ENCODE measurements at regions of chr14 and their contacts with region 1.

Region 1: GRCh38 chr14:69002069-69002468 is 23.0 kb upstream of the ACTN1 start:
- DNase-seq: no peak
- ATAC-seq: peak; percentile 77
- H3K4me3 ChIP-seq: no peak overlapping the region
- H3K27ac ChIP-seq: no peak overlapping the region
- H3K4me1 ChIP-seq: peaks cover 13 to 19% of the 10 kb centered on the region in 2 experiments
- H3K27me3 ChIP-seq: no peaks in the 10 kb centered on the region
- CTCF ChIP-seq: peak; percentile 27 to 41 (median 33); a peak in 4 of 6 replicates
- POLR2A ChIP-seq: no peak
- RAD21 ChIP-seq: peak; percentile 58

Region 2: DNA sequence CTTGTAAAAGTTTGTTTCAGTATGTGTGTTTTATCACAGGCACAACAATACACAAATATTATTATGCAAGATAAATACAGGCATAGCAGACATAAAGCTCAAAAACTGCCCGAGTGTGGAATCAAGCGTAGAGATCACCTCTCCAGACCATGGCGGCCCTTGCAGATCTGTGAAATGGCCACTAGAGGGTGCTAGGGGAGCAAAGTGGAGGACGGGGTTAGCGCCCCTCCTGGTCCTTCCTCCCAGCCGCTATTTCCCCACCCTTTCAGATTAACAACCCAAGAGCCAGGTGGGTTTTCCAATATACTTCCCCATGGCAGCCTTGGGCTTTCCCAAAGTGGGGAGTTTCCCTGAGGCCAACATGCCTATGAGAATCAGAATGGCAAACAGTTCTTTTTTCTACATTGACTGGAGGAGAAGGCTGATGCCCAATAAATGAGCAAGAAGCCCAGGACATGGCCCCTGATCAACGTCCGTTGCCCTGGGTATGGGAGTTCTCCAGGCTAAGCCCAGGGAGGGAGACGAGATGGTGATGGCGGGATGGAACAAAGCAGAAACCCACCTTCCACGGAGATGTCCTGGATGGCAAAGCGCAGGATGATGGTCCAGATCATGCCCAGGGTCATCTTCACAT is 90.4 kb before region 1 on chr14:
- CTCF ChIA-PET with region 1: interaction called, 4 read pairs
- POLR2A ChIA-PET with region 1: no interaction called
- RAD21 ChIA-PET with region 1: no interaction called
- intact Hi-C with region 1: loop called (anchors 5 kb)
- DNase-seq: peak; percentile 54
- ATAC-seq: peak; percentile 98
- H3K4me3 ChIP-seq: no peak overlapping the region
- H3K27ac ChIP-seq: no peak overlapping the region
- H3K4me1 ChIP-seq: no peaks in the 10 kb centered on the region
- H3K27me3 ChIP-seq: no peaks in the 10 kb centered on the region
- CTCF ChIP-seq: peak; percentile 98 to 99 (median 99)
- POLR2A ChIP-seq: no peak
- RAD21 ChIP-seq: peak; percentile 92

Region 3: DNA sequence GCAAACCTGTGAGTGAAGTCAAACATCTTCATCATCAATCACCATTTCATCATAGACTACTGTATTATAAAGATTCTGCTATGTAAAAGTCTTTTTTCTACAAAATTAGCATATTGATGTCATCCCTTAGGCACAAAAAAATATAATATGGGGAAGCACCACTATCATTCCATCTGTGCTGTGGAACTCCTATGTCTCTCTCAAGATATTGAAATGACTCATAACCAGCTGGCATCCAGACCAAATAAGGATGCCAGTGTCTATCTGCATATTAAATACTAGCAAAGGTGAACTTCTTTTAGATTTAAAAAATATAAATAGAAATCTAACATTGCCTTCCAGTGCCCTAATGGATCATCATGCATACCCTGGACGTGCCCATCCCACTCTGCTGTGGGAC is 168.8 kb after region 1 on chr14:
- CTCF ChIA-PET with region 1: no interaction called
- POLR2A ChIA-PET with region 1: no interaction called
- RAD21 ChIA-PET with region 1: no interaction called
- intact Hi-C with region 1: no loop called
- DNase-seq: no peak
- ATAC-seq: no peak
- H3K4me3 ChIP-seq: no peak overlapping the region
- H3K27ac ChIP-seq: no peak overlapping the region
- H3K4me1 ChIP-seq: no peaks in the 10 kb centered on the region
- H3K27me3 ChIP-seq: no peaks in the 10 kb centered on the region
- CTCF ChIP-seq: no peak
- POLR2A ChIP-seq: no peak
- RAD21 ChIP-seq: no peak